ENCODE measurements at regions of chr3 and their contacts with region 1.

Region 1: GRCh38 chr3:45832691-45833090 is 9.2 kb downstream of the LZTFL1 start:
- DNase-seq: peak; percentile 38
- H3K4me3 ChIP-seq: no peak overlapping the region
- H3K27ac ChIP-seq: no peak overlapping the region
- H3K4me1 ChIP-seq: no peaks in the 10 kb centered on the region
- H3K27me3 ChIP-seq: no peaks in the 10 kb centered on the region
- CTCF ChIP-seq: peak; percentile 49 to 72

Region 2: GRCh38 chr3:45516829-45517228 is 315.9 kb before region 1 on chr3:
- CTCF ChIA-PET with region 1: no interaction called
- dilution Hi-C with region 1: no loop called
- in situ Hi-C with region 1: loop called in 1 of 2 experiments (anchors 10 kb)
- intact Hi-C with region 1: no loop called
- DNase-seq: no peak
- H3K4me3 ChIP-seq: no peak overlapping the region
- H3K27ac ChIP-seq: no peak overlapping the region
- H3K4me1 ChIP-seq: no peaks in the 10 kb centered on the region
- H3K27me3 ChIP-seq: no peaks in the 10 kb centered on the region
- CTCF ChIP-seq: no peak

Region 3: GRCh38 chr3:45593708-45594609 is 238.7 kb before region 1 on chr3:
- CTCF ChIA-PET with region 1: no interaction called
- dilution Hi-C with region 1: no loop called
- in situ Hi-C with region 1: no loop called
- intact Hi-C with region 1: loop called (anchors 10 kb)
- DNase-seq: peak; percentile 70
- H3K4me3 ChIP-seq: peak overlapping the region; percentile 45 to 56 (median 54)
- H3K27ac ChIP-seq: peak overlapping the region; percentile 63
- H3K4me1 ChIP-seq: peaks cover 42% of the 10 kb centered on the region
- H3K27me3 ChIP-seq: no peaks in the 10 kb centered on the region
- CTCF ChIP-seq: no peak

Region 4: DNA sequence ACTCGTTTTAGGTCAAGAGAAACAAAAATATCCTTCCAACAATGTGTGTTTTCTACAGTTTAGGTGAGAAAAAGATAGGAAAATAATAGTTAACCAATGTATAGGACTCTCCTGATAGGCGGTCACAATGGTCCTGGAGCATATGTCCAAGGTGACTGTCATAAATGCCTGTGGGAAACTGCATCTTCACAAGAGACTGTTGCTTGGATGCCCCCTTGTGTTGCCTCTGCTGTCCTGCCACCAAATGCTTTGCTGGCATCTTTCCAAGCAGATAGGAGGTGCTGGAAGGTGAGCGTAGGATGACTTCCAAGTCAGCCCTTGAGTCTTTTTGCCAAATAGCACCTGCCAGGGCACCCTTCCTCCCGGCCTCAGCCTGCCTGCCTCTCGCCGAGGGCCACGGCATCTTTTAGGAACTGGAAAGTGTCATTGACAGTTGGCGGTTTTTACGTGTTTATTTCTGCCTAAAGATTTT is 167.6 kb before region 1 on chr3:
- CTCF ChIA-PET with region 1: interaction called, 5 read pairs
- dilution Hi-C with region 1: no loop called
- in situ Hi-C with region 1: no loop called
- intact Hi-C with region 1: loop called (anchors 5 kb)
- DNase-seq: peak; percentile 61
- H3K4me3 ChIP-seq: peak overlapping the region in 2 of 3 experiments; percentile 36 to 38
- H3K27ac ChIP-seq: no peak overlapping the region
- H3K4me1 ChIP-seq: peaks cover 37% of the 10 kb centered on the region
- H3K27me3 ChIP-seq: no peaks in the 10 kb centered on the region
- CTCF ChIP-seq: peak; percentile 76 to 82

Region 5: GRCh38 chr3:45760878-45761711 is 71.6 kb before region 1 on chr3:
- CTCF ChIA-PET with region 1: interaction called, 6 read pairs
- dilution Hi-C with region 1: no loop called
- in situ Hi-C with region 1: loop called (anchors 5 to 10 kb)
- intact Hi-C with region 1: loop called (anchors 1 kb)
- DNase-seq: peak; percentile 26
- H3K4me3 ChIP-seq: no peak overlapping the region
- H3K27ac ChIP-seq: no peak overlapping the region
- H3K4me1 ChIP-seq: no peaks in the 10 kb centered on the region
- H3K27me3 ChIP-seq: no peaks in the 10 kb centered on the region
- CTCF ChIP-seq: peak; percentile 81 to 90

Region 6: GRCh38 chr3:45929042-45929679 is 96.5 kb after region 1 on chr3:
- CTCF ChIA-PET with region 1: interaction called, 4 read pairs
- dilution Hi-C with region 1: no loop called
- in situ Hi-C with region 1: no loop called
- intact Hi-C with region 1: loop called (anchors 2 kb)
- DNase-seq: no peak
- H3K4me3 ChIP-seq: no peak overlapping the region
- H3K27ac ChIP-seq: no peak overlapping the region
- H3K4me1 ChIP-seq: peaks cover 1% of the 10 kb centered on the region
- H3K27me3 ChIP-seq: no peaks in the 10 kb centered on the region
- CTCF ChIP-seq: peak; percentile 76 to 87

Measured in mammary epithelial cell (primary cell).